ENCODE measurements at regions of chr16 and their contacts with region 1.

Region 1: DNA sequence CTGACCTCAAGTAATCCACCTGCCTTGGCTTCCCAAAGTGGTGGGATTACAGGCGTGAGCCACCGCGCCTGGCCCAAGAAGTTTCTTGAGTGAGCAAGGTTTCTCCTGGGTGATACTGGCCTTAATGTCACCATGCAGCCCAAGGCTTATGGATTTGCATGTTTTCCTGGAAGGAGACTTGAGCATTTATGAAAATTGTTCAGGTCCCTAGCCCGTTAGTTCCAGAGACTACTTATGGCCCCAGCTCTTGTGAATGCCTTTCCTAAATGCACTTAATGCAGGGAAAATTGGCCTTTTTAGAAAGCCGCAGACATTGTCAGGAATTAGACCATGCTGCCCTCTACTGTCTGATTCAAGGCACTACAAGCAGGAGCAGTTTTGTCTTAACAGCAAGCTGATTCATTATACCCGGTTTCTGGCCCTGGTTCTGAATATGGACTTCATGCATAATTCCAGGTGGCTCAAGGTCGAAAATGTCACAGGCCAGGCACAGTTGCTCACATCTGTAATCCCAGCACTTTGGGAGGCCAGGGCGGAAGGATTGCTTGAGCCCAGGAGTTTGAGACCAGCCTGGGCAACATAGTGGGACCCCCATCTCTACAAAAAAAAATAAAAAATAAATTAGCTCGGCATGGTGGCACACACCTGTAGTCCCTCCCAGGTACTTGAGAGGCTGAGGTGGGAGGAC is 91.3 kb downstream of the SNX29 start:
- DNase-seq: peak; percentile 56 to 73 (median 68)
- H3K4me3 ChIP-seq: no peak overlapping the region
- H3K4me3 Mint-ChIP-seq: no peak overlapping the region
- H3K27ac ChIP-seq: no peak overlapping the region
- H3K27ac Mint-ChIP-seq: no peak overlapping the region
- H3K4me1 ChIP-seq: peaks cover 11 to 13% of the 10 kb centered on the region in 2 donors
- H3K4me1 Mint-ChIP-seq: peaks cover 13% of the 10 kb centered on the region
- H3K27me3 ChIP-seq: no peaks in the 10 kb centered on the region
- H3K27me3 Mint-ChIP-seq: no peaks in the 10 kb centered on the region
- CTCF ChIP-seq: peak; percentile 93

Region 2: DNA sequence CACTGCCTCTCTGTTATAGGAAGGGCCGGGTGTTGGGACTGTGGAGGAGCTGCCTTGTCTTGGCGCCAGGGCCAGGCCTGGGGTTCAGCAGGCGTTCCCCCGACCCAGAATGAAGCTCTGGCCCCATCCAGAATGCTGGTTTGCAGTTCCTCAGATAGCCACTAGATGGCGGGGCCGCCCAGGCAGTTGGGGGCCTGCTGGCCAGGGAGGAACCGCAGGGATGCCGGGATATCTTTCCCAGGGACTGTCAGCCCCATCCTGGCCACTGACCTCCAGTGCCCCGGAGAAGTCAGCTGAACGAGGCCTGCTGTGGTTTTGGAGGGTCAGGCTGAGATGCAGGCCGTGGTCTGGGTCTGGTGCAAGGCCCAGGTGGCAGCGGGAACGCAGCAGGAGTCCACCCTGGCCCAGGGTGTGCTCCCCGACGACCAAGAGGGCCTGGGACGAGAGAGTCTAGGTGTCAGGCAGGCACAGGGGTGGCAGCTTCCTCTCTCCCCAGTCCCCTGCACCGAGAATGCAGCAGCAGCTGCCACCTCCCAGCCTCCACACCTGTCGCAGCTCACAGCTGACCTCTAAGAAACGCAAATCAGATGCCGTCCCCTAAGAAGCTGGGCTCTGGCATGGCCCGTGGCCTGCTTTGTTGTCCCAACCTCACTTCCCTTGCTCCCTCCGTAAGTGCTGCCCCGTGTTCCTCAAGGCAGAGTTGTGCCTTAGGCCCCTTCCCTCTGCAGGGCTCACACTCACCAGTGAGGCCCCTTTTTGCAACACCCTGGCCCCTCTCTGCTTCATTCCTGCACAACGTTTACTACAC is 671.4 kb before region 1 on chr16:
- intact Hi-C with region 1: loop called in 1 of 2 experiments (anchors 5 kb)
- DNase-seq: peak; percentile 38 to 62 (median 58)
- H3K4me3 ChIP-seq: no peak overlapping the region
- H3K4me3 Mint-ChIP-seq: no peak overlapping the region
- H3K27ac ChIP-seq: no peak overlapping the region
- H3K27ac Mint-ChIP-seq: peak overlapping the region in 2 of 7 donors; percentile 24 to 68
- H3K4me1 ChIP-seq: no peaks in the 10 kb centered on the region
- H3K4me1 Mint-ChIP-seq: no peaks in the 10 kb centered on the region
- H3K27me3 ChIP-seq: no peaks in the 10 kb centered on the region
- H3K27me3 Mint-ChIP-seq: peaks cover 3 to 10% (median 5%) of the 10 kb centered on the region in 3 donors
- CTCF ChIP-seq: peak; percentile 100

Region 3: DNA sequence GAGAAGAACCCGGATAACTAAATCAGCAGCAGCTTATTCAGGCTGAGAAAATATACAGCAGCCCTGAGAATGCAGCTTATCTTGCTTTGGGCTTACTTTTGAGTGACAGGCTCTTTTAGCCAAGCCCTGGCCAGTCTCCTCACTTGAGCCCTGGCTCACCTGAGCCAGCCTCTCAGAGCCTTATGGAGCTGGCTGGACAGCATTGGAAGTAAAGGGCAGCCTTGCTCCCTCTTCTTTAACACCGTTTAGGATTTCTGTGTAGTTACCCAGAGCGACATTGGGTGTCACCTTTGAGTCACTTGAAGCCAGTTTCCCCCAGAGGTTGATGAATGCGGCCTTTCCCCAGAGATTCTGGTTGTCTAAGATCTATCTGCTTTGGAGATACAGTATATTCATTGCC is 118.3 kb before region 1 on chr16:
- intact Hi-C with region 1: loop called in 1 of 2 experiments (anchors 2 kb)
- DNase-seq: peak; percentile 13 to 32 (median 26)
- H3K4me3 ChIP-seq: no peak overlapping the region
- H3K4me3 Mint-ChIP-seq: no peak overlapping the region
- H3K27ac ChIP-seq: no peak overlapping the region
- H3K27ac Mint-ChIP-seq: no peak overlapping the region
- H3K4me1 ChIP-seq: no peaks in the 10 kb centered on the region
- H3K4me1 Mint-ChIP-seq: no peaks in the 10 kb centered on the region
- H3K27me3 ChIP-seq: no peaks in the 10 kb centered on the region
- H3K27me3 Mint-ChIP-seq: peaks cover 0 to 3% (median 0%) of the 10 kb centered on the region in 3 donors
- CTCF ChIP-seq: peak; percentile 51

Region 4: DNA sequence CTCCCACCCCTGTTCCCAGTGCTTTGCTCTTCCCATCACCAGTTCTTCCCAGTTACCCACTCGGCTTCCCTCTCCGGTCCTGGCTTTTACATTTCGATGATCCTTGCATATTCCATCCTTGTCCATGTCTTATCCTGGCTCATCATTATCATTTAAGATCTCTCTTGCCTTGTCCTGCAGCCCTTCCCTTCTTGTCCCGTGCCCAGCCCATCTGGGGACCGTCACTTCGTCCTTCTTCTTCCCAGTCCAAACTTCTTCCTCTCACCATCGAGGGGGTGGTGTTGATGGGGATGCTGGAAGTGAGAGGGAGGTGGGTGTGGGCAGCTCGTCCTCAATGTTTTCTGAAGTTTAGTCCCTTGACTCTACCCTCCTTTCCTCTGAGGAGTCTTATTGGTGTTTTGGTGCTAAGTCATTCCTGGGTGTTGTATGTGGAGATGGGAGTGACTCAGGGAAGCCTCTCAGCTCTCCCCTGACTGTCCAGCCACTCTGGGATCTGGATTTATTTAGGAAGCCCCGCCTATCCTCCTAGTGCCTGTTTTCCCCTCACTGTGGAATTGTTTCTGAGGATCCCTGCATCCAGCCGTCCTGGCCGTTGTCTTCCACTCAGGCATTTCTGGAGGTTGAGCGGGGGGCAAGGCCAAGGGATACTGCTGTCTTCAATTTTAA is 90.3 kb before region 1 on chr16:
- intact Hi-C with region 1: loop called (anchors 5 to 10 kb)
- DNase-seq: peak in 1 of 3 donors; percentile 36
- H3K4me3 ChIP-seq: peak overlapping the region; percentile 84 to 95 (median 92)
- H3K4me3 Mint-ChIP-seq: peak overlapping the region; percentile 97 to 98
- H3K27ac ChIP-seq: peak overlapping the region in 1 of 2 donors; percentile 93
- H3K27ac Mint-ChIP-seq: peak overlapping the region; percentile 85 to 95 (median 92)
- H3K4me1 ChIP-seq: peaks cover 23 to 27% of the 10 kb centered on the region in 2 donors
- H3K4me1 Mint-ChIP-seq: peaks cover 40% of the 10 kb centered on the region
- H3K27me3 ChIP-seq: no peaks in the 10 kb centered on the region
- H3K27me3 Mint-ChIP-seq: peaks cover 0 to 2% (median 0%) of the 10 kb centered on the region in 3 donors
- CTCF ChIP-seq: no peak

Region 5: GRCh38 chr16:12010388-12011251 is 57.2 kb before region 1 on chr16:
- intact Hi-C with region 1: loop called in 1 of 2 experiments (anchors 10 kb)
- DNase-seq: peak; percentile 62 to 77 (median 62)
- H3K4me3 ChIP-seq: peak overlapping the region; percentile 11 to 53 (median 25)
- H3K4me3 Mint-ChIP-seq: peak overlapping the region; percentile 58 to 81
- H3K27ac ChIP-seq: peak overlapping the region; percentile 82 to 83
- H3K27ac Mint-ChIP-seq: peak overlapping the region; percentile 88 to 97 (median 94)
- H3K4me1 ChIP-seq: peaks cover 20 to 25% of the 10 kb centered on the region in 2 donors
- H3K4me1 Mint-ChIP-seq: peaks cover 25% of the 10 kb centered on the region
- H3K27me3 ChIP-seq: no peaks in the 10 kb centered on the region
- H3K27me3 Mint-ChIP-seq: peaks cover 0 to 2% (median 0%) of the 10 kb centered on the region in 3 donors
- CTCF ChIP-seq: no peak

Measured in CD14-positive monocyte (primary cell).